Natural killer cell (primary cell): ENCODE measurements at regions of chrX and their contacts with region 1.

Region 1: DNA sequence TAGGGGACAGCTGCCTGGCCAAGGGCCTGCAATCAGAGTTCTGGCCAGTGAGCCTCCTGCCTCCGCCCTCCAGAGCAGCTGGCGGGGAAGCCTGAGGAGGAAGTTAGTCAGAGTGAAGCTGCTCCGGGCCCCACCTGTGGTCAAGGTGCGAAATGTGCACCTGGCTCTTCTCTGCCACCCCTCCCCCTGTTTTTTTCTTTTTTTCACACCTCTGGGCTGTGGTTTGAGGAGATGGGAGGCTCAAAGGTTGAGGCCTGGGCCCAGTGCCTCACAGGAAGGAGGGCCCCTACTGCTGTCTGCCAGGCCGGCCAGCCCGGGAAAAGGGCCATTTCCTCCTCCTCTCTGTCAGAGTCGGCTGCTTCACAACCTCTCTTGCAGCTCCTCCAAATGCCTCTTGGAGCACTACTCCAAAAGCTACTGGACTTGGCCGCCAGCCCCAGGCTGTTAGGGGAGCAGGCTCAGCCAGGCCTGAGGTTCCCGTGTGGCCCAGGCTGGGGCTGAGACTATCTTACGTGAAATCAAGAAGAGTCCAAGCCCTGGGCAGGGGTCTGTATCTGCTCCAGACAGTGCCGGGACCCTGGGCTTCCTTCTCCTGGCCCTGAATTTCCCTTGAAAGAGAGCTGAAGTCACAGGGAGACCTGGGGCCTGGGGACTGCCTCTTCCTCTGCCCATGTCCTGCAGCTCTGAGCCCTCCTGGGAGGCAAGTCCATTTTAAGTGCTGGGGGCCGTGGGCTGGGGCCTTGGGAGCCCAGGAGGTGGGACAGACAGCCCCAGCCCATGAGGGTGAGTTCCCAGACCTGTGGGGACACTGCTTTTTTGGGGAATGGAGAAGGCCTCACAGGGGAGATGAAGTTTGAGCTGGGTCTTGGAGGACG is 4.5 kb upstream of the CXCR3 start:
- DNase-seq: peak; percentile 46 to 85
- ATAC-seq: peak; percentile 51 to 71 (median 63)
- H3K4me3 ChIP-seq: no peak overlapping the region
- H3K4me3 Mint-ChIP-seq: peak overlapping the region; percentile 83
- H3K27ac ChIP-seq: peak overlapping the region; percentile 95
- H3K27ac Mint-ChIP-seq: peak overlapping the region; percentile 91 to 93
- H3K4me1 ChIP-seq: peaks cover 73% of the 10 kb centered on the region
- H3K4me1 Mint-ChIP-seq: peaks cover 53 to 68% of the 10 kb centered on the region in 2 donors
- H3K27me3 ChIP-seq: no peaks in the 10 kb centered on the region
- H3K27me3 Mint-ChIP-seq: no peaks in the 10 kb centered on the region
- CTCF ChIP-seq: no peak

Region 2: DNA sequence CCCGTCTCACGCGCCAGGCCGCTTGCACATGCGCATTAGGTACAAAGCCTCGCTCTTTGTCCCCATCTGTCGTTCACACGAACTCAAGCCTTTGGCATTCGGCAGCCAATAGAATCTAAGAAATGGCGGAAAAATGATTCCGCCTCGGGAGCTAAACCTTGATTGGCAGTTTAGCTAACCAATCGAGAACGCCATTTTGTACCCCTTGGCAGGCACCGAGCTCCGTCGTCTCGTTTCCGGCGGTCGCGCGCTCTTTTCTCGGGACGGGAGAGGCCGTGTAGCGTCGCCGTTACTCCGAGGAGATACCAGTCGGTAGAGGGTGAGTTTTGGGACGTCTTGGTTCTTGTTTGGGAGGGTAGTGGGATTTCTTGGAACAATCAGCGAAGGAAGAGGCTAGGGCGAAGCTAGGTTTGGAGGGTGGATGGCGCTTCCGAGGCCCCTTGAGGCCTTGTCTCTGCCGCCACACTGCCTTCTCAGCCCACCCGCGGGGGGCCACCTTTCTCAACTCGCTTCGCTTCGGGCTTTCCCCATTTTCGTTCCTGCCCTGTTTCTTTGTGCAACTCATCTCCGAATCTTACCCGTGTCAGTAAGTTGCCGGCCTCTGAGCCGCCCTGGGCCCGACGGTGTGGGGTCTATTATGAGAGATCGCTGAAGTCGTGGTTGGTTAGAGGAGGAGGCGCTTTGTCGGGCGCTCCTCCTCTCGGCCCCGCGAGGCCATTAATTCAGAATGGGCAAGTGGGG is 339.2 kb before region 1 on chrX and contains the start of gene NONO:
- intact Hi-C with region 1: no loop called
- DNase-seq: peak; percentile 66 to 97
- ATAC-seq: peak; percentile 85 to 94 (median 90)
- H3K4me3 ChIP-seq: peak within 1 kb of the TSS; percentile 69
- H3K4me3 Mint-ChIP-seq: peak within 1 kb of the TSS; percentile 99
- H3K27ac ChIP-seq: peak within 1 kb of the TSS; percentile 93
- H3K27ac Mint-ChIP-seq: peak within 1 kb of the TSS; percentile 99 to 100
- H3K4me1 ChIP-seq: peaks cover 17% of the 10 kb centered on the region
- H3K4me1 Mint-ChIP-seq: peaks cover 16 to 20% of the 10 kb centered on the region in 2 donors
- H3K27me3 ChIP-seq: no peaks in the 10 kb centered on the region
- H3K27me3 Mint-ChIP-seq: peaks cover 7% of the 10 kb centered on the region in 2 donors
- CTCF ChIP-seq: no peak
- total RNA-seq, gene NONO: 370 to 454 (median 439) TPM

Region 3: GRCh38 chrX:71606536-71607216 is 16.1 kb before region 1 on chrX:
- intact Hi-C with region 1: loop called (anchors 2 kb)
- DNase-seq: peak in 1 of 2 donors; percentile 72
- ATAC-seq: peak; percentile 89 to 96 (median 93)
- H3K4me3 ChIP-seq: no peak overlapping the region
- H3K4me3 Mint-ChIP-seq: peak overlapping the region; percentile 52
- H3K27ac ChIP-seq: peak overlapping the region; percentile 72
- H3K27ac Mint-ChIP-seq: peak overlapping the region; percentile 77 to 88
- H3K4me1 ChIP-seq: peaks cover 42% of the 10 kb centered on the region
- H3K4me1 Mint-ChIP-seq: peaks cover 52 to 63% of the 10 kb centered on the region in 2 donors
- H3K27me3 ChIP-seq: no peaks in the 10 kb centered on the region
- H3K27me3 Mint-ChIP-seq: peaks cover 0 to 17% of the 10 kb centered on the region in 2 donors
- CTCF ChIP-seq: no peak

Region 4: GRCh38 chrX:71652405-71652804 is 29.6 kb after region 1 on chrX:
- intact Hi-C with region 1: loop called (anchors 2 kb)
- DNase-seq: peak in 1 of 2 donors; percentile 78
- ATAC-seq: peak; percentile 59 to 92 (median 84)
- H3K4me3 ChIP-seq: no peak overlapping the region
- H3K4me3 Mint-ChIP-seq: no peak overlapping the region
- H3K27ac ChIP-seq: no peak overlapping the region
- H3K27ac Mint-ChIP-seq: no peak overlapping the region
- H3K4me1 ChIP-seq: peaks cover 5% of the 10 kb centered on the region
- H3K4me1 Mint-ChIP-seq: peaks cover 4 to 8% of the 10 kb centered on the region in 2 donors
- H3K27me3 ChIP-seq: no peaks in the 10 kb centered on the region
- H3K27me3 Mint-ChIP-seq: peaks cover 0 to 10% of the 10 kb centered on the region in 2 donors
- CTCF ChIP-seq: peak; percentile 51

Region 5: GRCh38 chrX:71671043-71671780 is 48.4 kb after region 1 on chrX:
- intact Hi-C with region 1: no loop called
- DNase-seq: peak in 1 of 2 donors; percentile 25
- ATAC-seq: no peak
- H3K4me3 ChIP-seq: no peak overlapping the region
- H3K4me3 Mint-ChIP-seq: no peak overlapping the region
- H3K27ac ChIP-seq: no peak overlapping the region
- H3K27ac Mint-ChIP-seq: peak overlapping the region in 1 of 2 donors; percentile 44
- H3K4me1 ChIP-seq: peaks cover 13% of the 10 kb centered on the region
- H3K4me1 Mint-ChIP-seq: peaks cover 0 to 10% of the 10 kb centered on the region in 2 donors
- H3K27me3 ChIP-seq: no peaks in the 10 kb centered on the region
- H3K27me3 Mint-ChIP-seq: peaks cover 0 to 6% of the 10 kb centered on the region in 2 donors
- CTCF ChIP-seq: no peak

Region 6: DNA sequence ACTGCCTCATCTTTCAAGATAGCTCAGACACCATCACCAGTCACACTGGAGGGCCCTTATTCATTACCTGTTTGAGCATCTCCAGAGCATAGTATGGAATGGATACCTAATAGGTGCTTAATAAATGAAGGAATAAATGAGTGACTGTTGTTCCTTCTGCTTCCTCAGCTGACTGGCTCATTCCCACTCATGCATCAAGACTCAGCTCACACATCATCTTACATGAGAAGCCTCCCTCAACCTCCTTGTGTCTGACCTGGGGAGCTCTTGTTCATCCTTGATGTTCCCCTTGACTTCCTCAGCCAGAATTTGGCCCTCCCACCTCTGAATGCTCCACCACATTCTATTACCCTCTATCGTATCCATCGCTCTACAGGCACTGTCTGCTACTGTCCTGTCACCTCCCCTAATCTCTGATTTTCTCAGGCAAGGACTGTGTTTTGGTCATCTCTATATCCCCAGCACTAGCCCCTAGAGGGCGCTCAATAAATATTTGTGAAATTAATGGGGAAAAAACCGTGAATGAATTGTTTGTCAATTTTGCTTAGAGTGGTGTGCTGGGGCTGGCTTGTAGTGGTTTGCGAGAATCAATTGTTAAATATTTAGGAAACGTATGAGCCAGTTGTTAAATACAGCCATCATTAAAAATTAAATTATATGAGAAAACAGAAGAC is 376.2 kb after region 1 on chrX:
- intact Hi-C with region 1: no loop called
- DNase-seq: peak in 1 of 2 donors; percentile 63
- ATAC-seq: peak; percentile 58 to 75 (median 71)
- H3K4me3 ChIP-seq: no peak overlapping the region
- H3K4me3 Mint-ChIP-seq: no peak overlapping the region
- H3K27ac ChIP-seq: no peak overlapping the region
- H3K27ac Mint-ChIP-seq: no peak overlapping the region
- H3K4me1 ChIP-seq: peaks cover 12% of the 10 kb centered on the region
- H3K4me1 Mint-ChIP-seq: peaks cover 23 to 27% of the 10 kb centered on the region in 2 donors
- H3K27me3 ChIP-seq: no peaks in the 10 kb centered on the region
- H3K27me3 Mint-ChIP-seq: peaks cover 15 to 26% of the 10 kb centered on the region in 2 donors
- CTCF ChIP-seq: peak; percentile 62

Region 7: GRCh38 chrX:72100824-72101351 is 478.1 kb after region 1 on chrX:
- intact Hi-C with region 1: loop called (anchors 5 kb)
- DNase-seq: peak; percentile 75 to 90
- ATAC-seq: peak; percentile 61 to 85 (median 75)
- H3K4me3 ChIP-seq: peak overlapping the region; percentile 78
- H3K4me3 Mint-ChIP-seq: peak overlapping the region; percentile 92
- H3K27ac ChIP-seq: peak overlapping the region; percentile 96
- H3K27ac Mint-ChIP-seq: peak overlapping the region; percentile 88 to 91
- H3K4me1 ChIP-seq: peaks cover 71% of the 10 kb centered on the region
- H3K4me1 Mint-ChIP-seq: peaks cover 48 to 67% of the 10 kb centered on the region in 2 donors
- H3K27me3 ChIP-seq: no peaks in the 10 kb centered on the region
- H3K27me3 Mint-ChIP-seq: peaks cover 0 to 30% of the 10 kb centered on the region in 2 donors
- CTCF ChIP-seq: no peak